ENCODE measurements at regions of chr1 and their contacts with region 1.

Region 1: DNA sequence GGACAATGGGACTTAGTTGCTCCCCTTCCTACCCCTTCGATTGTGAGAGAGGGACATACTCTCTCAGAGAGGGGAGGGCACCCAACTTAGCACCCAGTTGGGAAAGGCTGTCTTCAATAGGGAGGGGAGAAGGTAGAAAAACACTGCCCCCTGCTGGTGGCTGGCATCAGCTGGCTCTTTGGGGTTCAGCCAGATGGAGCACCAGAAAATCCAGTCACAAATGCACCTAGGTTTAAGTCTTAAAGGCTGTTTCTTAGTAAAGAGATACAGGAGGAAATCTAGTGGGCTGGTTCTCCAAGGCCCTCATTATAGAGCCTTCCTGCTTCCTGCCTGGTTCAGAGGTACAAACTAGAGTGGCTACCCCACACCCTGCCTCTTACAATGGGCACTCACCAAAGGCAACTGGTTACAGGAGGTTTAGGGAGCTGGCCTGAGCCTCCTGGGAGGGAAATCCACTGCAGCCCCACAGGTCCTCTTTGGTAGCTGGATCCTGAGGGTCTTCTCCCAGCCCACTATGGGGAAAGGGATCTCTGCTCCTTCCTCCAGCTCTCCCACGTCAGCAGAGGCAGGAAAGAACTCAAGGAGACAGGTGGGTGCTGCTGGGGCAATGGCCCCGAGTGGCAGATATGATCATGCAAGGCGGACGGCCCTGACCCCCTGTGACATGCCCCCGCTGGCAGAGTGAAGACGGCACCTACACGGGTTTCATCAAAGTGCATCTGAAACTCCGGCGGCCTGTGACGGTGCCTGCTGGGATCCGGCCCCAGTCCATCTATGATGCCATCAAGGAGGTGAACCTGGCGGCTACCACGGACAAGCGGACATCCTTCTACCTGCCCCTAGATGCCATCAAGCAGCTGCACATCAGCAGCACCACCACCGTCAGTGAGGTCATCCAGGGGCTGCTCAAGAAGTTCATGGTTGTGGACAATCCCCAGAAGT is 28.3 kb downstream of the EIF2D start:
- DNase-seq: peak; percentile 80 to 82
- H3K4me3 ChIP-seq: no peak overlapping the region
- H3K27ac ChIP-seq: peak overlapping the region in 2 of 3 donors; percentile 4 to 6
- H3K4me1 ChIP-seq: no peaks in the 10 kb centered on the region
- H3K27me3 ChIP-seq: no peaks in the 10 kb centered on the region
- CTCF ChIP-seq: peak; percentile 80 to 96 (median 85)
- POLR2A ChIP-seq: no peak

Region 2: DNA sequence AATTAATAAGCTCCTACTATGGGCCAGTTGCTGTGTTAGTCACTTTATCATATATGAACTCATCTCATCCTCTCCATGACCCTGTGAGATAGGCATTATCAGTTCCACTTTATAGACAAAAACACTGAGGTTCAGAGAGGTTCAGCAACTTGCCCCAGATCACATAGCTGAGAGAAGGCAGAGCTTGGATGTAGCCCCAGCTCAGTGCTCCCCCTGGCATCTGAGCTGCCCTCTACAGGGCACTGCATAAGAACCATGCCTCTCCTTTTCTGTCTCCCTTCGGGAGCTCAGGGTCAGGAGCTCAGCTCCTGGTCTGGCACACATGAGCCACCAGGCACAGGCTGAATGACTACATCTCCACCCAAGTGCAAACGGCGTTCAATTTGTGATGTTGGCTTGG is 597.7 kb before region 1 on chr1:
- intact Hi-C with region 1: no loop called
- DNase-seq: peak in 1 of 2 donors; percentile 20
- H3K4me3 ChIP-seq: no peak overlapping the region
- H3K27ac ChIP-seq: peak overlapping the region; percentile 5 to 29 (median 28)
- H3K4me1 ChIP-seq: peaks cover 24 to 30% of the 10 kb centered on the region in 2 donors
- H3K27me3 ChIP-seq: no peaks in the 10 kb centered on the region
- CTCF ChIP-seq: no peak
- POLR2A ChIP-seq: no peak

Region 3: DNA sequence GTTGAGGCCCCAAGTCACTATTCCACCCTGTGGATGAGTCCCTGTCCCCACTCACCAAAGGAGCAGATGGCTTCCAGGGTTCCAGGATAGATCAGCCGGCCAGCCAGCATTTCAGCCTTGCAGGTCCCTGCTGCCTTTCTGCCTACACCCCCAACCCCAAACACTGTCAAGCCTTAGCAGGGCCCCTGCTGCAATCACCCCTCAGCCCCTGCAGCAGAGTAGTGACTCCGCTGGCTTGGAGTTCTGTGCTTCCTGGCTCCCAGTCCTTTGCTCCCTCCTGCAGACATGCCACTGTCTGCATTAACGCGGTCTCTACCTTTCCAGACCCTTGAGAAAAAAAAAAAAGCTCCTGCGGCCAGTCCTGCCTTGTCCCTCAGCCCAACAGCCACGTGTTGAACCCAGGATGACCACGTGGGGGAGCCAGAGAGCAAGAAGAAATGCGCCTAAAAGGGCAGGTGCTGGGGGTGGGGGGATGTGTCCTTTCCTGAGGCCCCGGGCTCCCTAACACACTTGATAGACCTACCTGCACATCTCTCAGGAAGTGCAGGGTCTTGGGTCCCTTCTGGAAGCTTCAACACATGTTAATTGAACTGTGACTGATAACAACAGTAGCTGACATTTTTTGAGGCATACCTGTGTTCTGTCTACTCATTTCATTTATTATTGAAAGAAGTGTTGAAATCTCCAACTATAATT is 39.3 kb before region 1 on chr1:
- intact Hi-C with region 1: loop called (anchors 5 kb)
- DNase-seq: peak; percentile 82 to 88
- H3K4me3 ChIP-seq: no peak overlapping the region
- H3K27ac ChIP-seq: peak overlapping the region in 1 of 3 donors; percentile 37
- H3K4me1 ChIP-seq: peaks cover 16 to 30% of the 10 kb centered on the region in 2 donors
- H3K27me3 ChIP-seq: no peaks in the 10 kb centered on the region
- CTCF ChIP-seq: peak; percentile 67 to 90 (median 72)
- POLR2A ChIP-seq: no peak

Region 4: GRCh38 chr1:206684478-206685333 is 100.7 kb after region 1 on chr1 and contains the start of gene MAPKAPK2:
- intact Hi-C with region 1: no loop called
- DNase-seq: peak; percentile 75
- H3K4me3 ChIP-seq: peak within 1 kb of the TSS; percentile 31 to 70 (median 58)
- H3K27ac ChIP-seq: peak within 1 kb of the TSS; percentile 89 to 97 (median 89)
- H3K4me1 ChIP-seq: peaks cover 25 to 37% of the 10 kb centered on the region in 2 donors
- H3K27me3 ChIP-seq: no peaks in the 10 kb centered on the region
- CTCF ChIP-seq: no peak
- POLR2A ChIP-seq: peak in 1 of 2 donors; percentile 51
- total RNA-seq, gene MAPKAPK2: 48.5 to 64.0 (median 59.9) TPM

Measured in thyroid gland (tissue), 4 donors.